ENCODE measurements at regions of chr1 and their contacts with region 1.

Region 1: DNA sequence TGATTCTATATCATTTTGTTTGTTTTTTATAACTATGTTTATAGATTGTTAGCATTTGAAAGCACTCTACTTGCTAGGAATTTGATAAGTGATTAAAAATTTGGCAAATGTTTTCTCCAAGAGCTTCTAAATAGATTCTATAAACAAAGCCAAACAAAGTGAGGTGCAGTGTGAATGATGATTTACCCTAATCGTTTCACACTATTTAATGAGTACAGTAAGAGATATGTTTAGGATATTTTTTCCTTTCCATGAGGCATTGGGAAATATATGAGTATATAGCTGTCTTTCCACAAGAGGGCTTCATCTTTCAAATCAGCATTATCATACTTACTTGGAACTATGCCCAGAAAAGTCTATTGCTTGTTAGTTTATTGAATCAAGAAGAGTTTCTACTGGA is 277.0 kb upstream of the BRINP3 start:
- DNase-seq: no peak
- H3K4me3 Mint-ChIP-seq: no peak overlapping the region
- H3K27ac Mint-ChIP-seq: no peak overlapping the region
- H3K4me1 Mint-ChIP-seq: peaks cover 9% of the 10 kb centered on the region
- H3K27me3 Mint-ChIP-seq: no peaks in the 10 kb centered on the region
- CTCF ChIP-seq: peak; percentile 29

Region 2: DNA sequence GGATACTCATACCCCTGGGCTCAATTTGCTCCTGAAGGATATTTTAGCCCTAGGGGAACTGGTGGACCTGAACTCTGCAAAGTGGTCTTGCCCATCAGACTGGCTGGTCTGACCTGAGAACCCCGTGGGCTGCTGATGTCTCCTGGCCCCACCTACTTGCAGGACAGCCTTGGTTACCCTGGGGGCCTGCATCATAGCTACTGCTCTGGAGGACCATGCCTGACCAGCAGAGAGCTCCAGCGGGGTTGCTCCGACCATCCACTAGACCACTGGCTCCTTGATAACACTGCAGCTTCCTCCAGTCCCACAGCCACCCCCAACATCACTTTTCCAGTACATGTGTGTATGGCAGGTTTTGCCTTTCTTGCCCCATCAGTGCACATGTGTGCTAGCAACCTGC is 54.6 kb after region 1 on chr1:
- CTCF ChIA-PET with region 1: no interaction called
- intact Hi-C with region 1: no loop called
- DNase-seq: no peak
- H3K4me3 Mint-ChIP-seq: no peak overlapping the region
- H3K27ac Mint-ChIP-seq: no peak overlapping the region
- H3K4me1 Mint-ChIP-seq: no peaks in the 10 kb centered on the region
- H3K27me3 Mint-ChIP-seq: no peaks in the 10 kb centered on the region
- CTCF ChIP-seq: no peak

Region 3: DNA sequence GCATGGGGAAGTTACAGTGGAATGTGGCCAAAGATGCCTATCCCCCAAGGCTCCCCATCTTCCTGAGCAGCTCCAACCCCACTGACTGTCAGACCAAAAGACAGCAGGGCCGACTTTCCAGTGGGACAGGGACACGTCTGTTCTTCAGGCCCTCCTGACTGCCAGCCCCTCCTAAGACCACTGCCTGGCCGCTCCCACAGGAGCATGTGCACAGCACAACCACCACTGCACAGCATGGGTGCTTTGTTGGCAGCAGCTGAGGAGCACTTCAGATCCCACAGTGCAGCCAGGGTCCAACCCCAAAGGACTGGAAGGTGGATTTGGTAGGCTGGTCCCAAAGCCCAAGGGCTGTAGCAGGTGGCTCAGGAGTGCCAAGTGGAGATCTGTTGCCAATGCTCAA is 371.3 kb after region 1 on chr1:
- CTCF ChIA-PET with region 1: no interaction called
- intact Hi-C with region 1: loop called (anchors 10 kb)
- DNase-seq: no peak
- H3K4me3 Mint-ChIP-seq: no peak overlapping the region
- H3K27ac Mint-ChIP-seq: no peak overlapping the region
- H3K4me1 Mint-ChIP-seq: no peaks in the 10 kb centered on the region
- H3K27me3 Mint-ChIP-seq: no peaks in the 10 kb centered on the region
- CTCF ChIP-seq: no peak

Measured in Calu3 (cell line).